A673 (cell line): ENCODE measurements at regions of chr12 and their contacts with region 1.

Region 1: DNA sequence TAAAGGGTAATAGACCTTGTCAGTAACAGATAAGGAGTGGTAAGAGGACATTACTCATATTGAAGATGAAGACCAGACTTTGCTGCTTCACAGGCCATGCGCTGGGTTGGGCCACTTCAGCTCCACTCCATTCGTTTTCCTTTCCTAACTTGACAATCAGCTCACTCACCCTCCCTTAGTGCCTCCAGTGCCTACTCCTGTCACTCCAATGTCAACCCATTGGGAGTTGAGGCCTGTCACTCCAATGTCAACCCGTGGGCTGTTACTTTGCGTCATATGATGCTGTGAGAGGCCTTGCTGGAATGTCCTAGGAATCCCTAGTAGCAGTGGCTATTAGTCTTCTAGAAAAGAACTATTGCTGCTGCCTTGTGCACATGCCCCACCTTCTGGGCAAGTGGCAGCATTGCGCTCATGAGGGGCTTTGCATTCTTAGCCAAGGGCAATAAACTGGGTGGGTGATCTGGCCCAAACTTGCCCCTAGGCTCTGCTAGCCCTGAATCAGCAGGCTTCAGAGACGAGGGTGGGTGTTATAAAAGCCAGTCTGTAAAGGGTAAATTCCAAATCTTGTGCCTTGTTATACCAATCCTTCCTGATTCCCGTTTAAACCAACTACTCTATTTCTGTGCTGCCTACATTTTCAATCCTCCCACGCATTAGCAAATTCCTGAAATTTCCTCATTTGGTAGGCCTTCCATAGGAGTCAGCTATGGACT is 36.1 kb downstream of the BAZ2A start:
- DNase-seq: peak; percentile 80
- H3K4me3 ChIP-seq: no peak overlapping the region
- H3K27ac ChIP-seq: no peak overlapping the region
- H3K4me1 ChIP-seq: no peaks in the 10 kb centered on the region
- H3K27me3 ChIP-seq: no peaks in the 10 kb centered on the region
- CTCF ChIP-seq: peak; percentile 91

Region 2: GRCh38 chr12:56490360-56490759 is 103.7 kb before region 1 on chr12:
- CTCF ChIA-PET with region 1: no interaction called
- POLR2A ChIA-PET with region 1: no interaction called
- intact Hi-C with region 1: loop called (anchors 5 kb)
- DNase-seq: no peak
- H3K4me3 ChIP-seq: no peak overlapping the region
- H3K27ac ChIP-seq: no peak overlapping the region
- H3K4me1 ChIP-seq: peaks cover 15% of the 10 kb centered on the region
- H3K27me3 ChIP-seq: peaks cover 30% of the 10 kb centered on the region
- CTCF ChIP-seq: no peak

Region 3: DNA sequence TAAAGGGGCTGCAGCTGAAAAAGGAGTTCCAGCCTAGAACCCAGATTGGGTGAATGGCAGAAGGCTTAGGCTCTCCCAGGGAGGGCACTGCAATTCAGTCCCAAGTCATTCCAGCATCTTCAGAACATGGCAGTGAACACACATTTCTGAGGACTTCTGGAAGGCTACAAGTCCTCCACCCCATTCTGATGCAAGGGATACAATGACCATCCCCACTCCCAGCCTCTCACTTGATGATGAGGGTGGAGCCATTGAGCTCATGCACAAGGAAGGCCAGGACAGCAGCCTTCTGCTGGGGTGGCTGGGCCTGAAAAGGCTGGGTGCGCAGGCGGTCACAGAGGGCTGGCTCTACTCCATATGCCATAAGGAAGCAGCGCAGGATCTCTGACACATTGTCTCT is 10.3 kb after region 1 on chr12:
- CTCF ChIA-PET with region 1: no interaction called
- POLR2A ChIA-PET with region 1: no interaction called
- intact Hi-C with region 1: no loop called
- DNase-seq: no peak
- H3K4me3 ChIP-seq: no peak overlapping the region
- H3K27ac ChIP-seq: no peak overlapping the region
- H3K4me1 ChIP-seq: no peaks in the 10 kb centered on the region
- H3K27me3 ChIP-seq: no peaks in the 10 kb centered on the region
- CTCF ChIP-seq: no peak

Region 4: GRCh38 chr12:56630160-56630632 is 36.1 kb after region 1 on chr12 and contains the start of gene BAZ2A:
- CTCF ChIA-PET with region 1: no interaction called
- POLR2A ChIA-PET with region 1: no interaction called
- intact Hi-C with region 1: no loop called
- DNase-seq: peak; percentile 94
- H3K4me3 ChIP-seq: peak within 1 kb of the TSS; percentile 99
- H3K27ac ChIP-seq: peak within 1 kb of the TSS; percentile 94
- H3K4me1 ChIP-seq: peaks cover 39% of the 10 kb centered on the region
- H3K27me3 ChIP-seq: no peaks in the 10 kb centered on the region
- CTCF ChIP-seq: no peak
- total RNA-seq, gene BAZ2A: 126 and 139 TPM in 2 replicates